ENCODE measurements at regions of chr7 and their contacts with region 1.

Region 1: DNA sequence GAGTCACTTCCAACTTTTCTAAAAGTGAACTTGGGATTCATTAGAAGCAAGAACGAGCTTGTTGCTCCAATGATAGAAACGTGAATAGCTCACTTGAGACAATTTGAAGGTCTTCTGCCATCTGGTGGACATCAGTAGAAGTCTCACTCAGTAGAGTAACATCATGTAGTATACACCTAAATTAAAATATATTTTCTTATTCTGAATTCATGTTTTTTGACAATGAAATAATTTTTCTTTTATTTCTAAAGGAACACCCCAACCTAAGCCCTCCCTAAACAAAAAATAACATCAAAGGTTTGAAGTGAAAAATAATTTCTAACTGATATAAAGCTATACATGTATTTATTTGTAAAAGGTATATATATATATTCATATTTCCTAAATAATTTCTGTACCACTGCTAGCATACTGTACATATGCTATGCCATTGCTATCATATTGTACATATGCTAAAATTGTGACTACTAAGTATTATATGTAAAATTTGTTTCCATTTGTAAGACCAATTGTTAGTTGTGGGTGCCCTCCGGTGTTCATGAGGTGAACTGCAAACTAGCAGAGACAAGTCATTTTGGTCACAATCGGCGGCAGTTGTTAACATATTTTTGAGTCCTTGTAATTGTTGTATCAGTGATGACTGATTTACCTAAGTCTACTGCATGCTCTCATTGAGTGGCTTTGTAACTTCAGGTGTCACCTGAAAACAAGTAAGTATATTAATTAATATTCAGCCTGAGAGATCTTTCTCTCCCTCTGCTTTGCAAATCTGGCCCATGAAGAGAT is 121.9 kb downstream of the PTPRZ1 start:
- DNase-seq: peak; percentile 46 to 63
- H3K4me3 ChIP-seq: no peak overlapping the region
- H3K27ac ChIP-seq: no peak overlapping the region
- H3K4me1 ChIP-seq: no peaks in the 10 kb centered on the region
- H3K27me3 ChIP-seq: no peaks in the 10 kb centered on the region
- CTCF ChIP-seq: peak; percentile 94

Region 2: GRCh38 chr7:120792091-120792860 is 1202.5 kb before region 1 on chr7:
- CTCF ChIA-PET with region 1: interaction called, 5 read pairs
- POLR2A ChIA-PET with region 1: no interaction called
- intact Hi-C with region 1: loop called (anchors 2 kb)
- DNase-seq: peak in 1 of 2 experiments; percentile 57
- H3K4me3 ChIP-seq: no peak overlapping the region
- H3K27ac ChIP-seq: no peak overlapping the region
- H3K4me1 ChIP-seq: no peaks in the 10 kb centered on the region
- H3K27me3 ChIP-seq: no peaks in the 10 kb centered on the region
- CTCF ChIP-seq: peak; percentile 85

Region 3: GRCh38 chr7:120987683-120988590 is 1006.9 kb before region 1 on chr7:
- CTCF ChIA-PET with region 1: interaction called, 3 read pairs
- POLR2A ChIA-PET with region 1: no interaction called
- intact Hi-C with region 1: loop called (anchors 2 kb)
- DNase-seq: peak; percentile 74 to 85
- H3K4me3 ChIP-seq: peak overlapping the region; percentile 74
- H3K27ac ChIP-seq: no peak overlapping the region
- H3K4me1 ChIP-seq: peaks cover 10% of the 10 kb centered on the region
- H3K27me3 ChIP-seq: no peaks in the 10 kb centered on the region
- CTCF ChIP-seq: peak; percentile 95

Region 4: GRCh38 chr7:121126801-121127534 is 867.9 kb before region 1 on chr7:
- CTCF ChIA-PET with region 1: interaction called, 9 read pairs
- POLR2A ChIA-PET with region 1: no interaction called
- intact Hi-C with region 1: loop called (anchors 1 kb)
- DNase-seq: no peak
- H3K4me3 ChIP-seq: no peak overlapping the region
- H3K27ac ChIP-seq: no peak overlapping the region
- H3K4me1 ChIP-seq: no peaks in the 10 kb centered on the region
- H3K27me3 ChIP-seq: no peaks in the 10 kb centered on the region
- CTCF ChIP-seq: peak; percentile 66

Region 5: DNA sequence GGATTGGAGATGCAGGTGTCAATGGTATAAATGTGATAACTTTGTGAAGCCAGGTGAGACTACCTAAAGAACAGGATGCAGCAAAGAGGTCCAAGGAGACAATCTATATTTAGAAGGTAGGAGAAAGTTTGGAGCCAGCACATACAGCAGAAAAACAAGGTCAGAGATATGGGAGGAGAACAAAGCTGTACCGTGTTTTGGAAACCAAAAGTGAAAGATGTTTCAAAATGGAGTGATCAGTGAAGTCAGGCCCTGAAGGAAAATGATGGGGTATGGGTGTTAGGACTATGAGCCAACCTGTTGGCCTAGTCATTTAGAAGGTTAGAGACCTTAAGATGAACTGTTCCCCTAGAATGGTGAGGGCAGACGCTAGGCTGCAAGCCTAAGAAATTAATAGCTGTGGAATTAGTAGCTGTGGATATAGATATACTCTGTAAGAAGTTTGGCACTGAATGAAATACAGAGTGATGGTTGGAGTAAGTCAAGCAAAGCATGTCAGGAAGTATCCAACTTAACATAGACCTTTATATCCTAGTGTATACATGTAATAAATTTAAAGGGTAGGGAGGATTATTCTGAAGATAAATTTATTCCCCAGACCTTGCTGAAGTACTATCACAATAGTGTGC is 815.8 kb before region 1 on chr7:
- CTCF ChIA-PET with region 1: interaction called, 13 read pairs
- POLR2A ChIA-PET with region 1: no interaction called
- intact Hi-C with region 1: no loop called
- DNase-seq: no peak
- H3K4me3 ChIP-seq: no peak overlapping the region
- H3K27ac ChIP-seq: no peak overlapping the region
- H3K4me1 ChIP-seq: no peaks in the 10 kb centered on the region
- H3K27me3 ChIP-seq: no peaks in the 10 kb centered on the region
- CTCF ChIP-seq: no peak

Region 6: DNA sequence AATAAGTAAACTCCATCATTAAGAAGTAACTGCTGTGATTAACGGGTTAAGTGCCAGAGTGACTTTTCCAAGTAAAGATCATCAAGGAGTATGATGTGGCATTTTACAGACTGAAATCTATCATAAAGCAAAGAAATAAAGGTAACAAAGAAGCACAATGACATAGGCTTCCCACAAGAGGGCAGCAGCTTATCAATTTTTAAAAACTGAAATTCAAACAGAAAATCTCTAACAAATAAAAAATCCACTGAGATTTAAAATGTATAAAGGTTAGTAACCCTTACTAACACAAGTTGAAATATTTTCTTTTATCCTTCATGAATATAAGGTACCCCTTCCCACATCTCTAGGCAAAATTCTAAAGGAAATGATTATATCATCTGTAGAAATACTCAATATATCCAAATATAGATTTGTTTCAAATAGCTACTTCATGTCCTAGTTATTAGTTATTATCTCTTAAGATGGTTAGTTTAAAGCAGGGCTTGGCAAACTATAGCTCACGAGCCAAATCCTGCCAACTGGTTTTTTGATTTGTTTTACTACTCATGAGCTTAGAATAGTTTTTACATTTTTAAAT is 627.9 kb before region 1 on chr7:
- CTCF ChIA-PET with region 1: interaction called, 14 read pairs
- POLR2A ChIA-PET with region 1: no interaction called
- intact Hi-C with region 1: loop called (anchors 1 kb)
- DNase-seq: peak; percentile 15 to 48
- H3K4me3 ChIP-seq: no peak overlapping the region
- H3K27ac ChIP-seq: peak overlapping the region; percentile 38
- H3K4me1 ChIP-seq: peaks cover 16% of the 10 kb centered on the region; the same call in 1 of the 2 replicates
- H3K27me3 ChIP-seq: no peaks in the 10 kb centered on the region
- CTCF ChIP-seq: peak; percentile 94

Region 7: DNA sequence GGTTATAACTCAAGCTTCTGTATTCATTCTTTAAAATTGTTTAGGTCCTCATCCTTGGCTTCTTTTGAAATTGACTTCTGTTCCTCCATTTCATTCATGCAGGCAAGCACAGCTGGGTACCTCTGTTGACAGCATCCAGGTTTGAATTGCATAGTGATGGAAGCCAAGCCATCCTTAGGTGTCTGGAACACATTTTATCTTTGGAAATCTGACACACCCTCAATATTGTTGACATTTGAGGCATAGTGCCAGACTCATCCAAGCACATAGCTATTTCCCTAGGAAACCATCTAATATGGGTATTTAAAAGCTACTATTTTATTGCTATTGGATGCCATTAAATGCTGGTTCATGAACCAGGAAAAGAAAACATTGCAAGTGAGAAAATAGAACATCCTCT is 263.9 kb before region 1 on chr7:
- CTCF ChIA-PET with region 1: no interaction called
- POLR2A ChIA-PET with region 1: no interaction called
- intact Hi-C with region 1: loop called (anchors 10 kb)
- DNase-seq: no peak
- H3K4me3 ChIP-seq: no peak overlapping the region
- H3K27ac ChIP-seq: no peak overlapping the region
- H3K4me1 ChIP-seq: no peaks in the 10 kb centered on the region
- H3K27me3 ChIP-seq: no peaks in the 10 kb centered on the region
- CTCF ChIP-seq: no peak

Measured in PC-9 (cell line).